T-cell (primary cell): ENCODE measurements at regions of chr11 and their contacts with region 1.

Region 1: GRCh38 chr11:82610671-82611070 is 123.0 kb downstream of the FAM181B start:
- DNase-seq: no peak
- ATAC-seq: no peak
- H3K4me3 ChIP-seq: no peak overlapping the region
- H3K4me3 Mint-ChIP-seq: no peak overlapping the region
- H3K27ac ChIP-seq: no peak overlapping the region
- H3K27ac Mint-ChIP-seq: no peak overlapping the region
- H3K4me1 ChIP-seq: no peaks in the 10 kb centered on the region
- H3K4me1 Mint-ChIP-seq: no peaks in the 10 kb centered on the region
- H3K27me3 ChIP-seq: no peaks in the 10 kb centered on the region
- H3K27me3 Mint-ChIP-seq: peaks cover 1 to 4% of the 10 kb centered on the region in 2 donors

Region 2: DNA sequence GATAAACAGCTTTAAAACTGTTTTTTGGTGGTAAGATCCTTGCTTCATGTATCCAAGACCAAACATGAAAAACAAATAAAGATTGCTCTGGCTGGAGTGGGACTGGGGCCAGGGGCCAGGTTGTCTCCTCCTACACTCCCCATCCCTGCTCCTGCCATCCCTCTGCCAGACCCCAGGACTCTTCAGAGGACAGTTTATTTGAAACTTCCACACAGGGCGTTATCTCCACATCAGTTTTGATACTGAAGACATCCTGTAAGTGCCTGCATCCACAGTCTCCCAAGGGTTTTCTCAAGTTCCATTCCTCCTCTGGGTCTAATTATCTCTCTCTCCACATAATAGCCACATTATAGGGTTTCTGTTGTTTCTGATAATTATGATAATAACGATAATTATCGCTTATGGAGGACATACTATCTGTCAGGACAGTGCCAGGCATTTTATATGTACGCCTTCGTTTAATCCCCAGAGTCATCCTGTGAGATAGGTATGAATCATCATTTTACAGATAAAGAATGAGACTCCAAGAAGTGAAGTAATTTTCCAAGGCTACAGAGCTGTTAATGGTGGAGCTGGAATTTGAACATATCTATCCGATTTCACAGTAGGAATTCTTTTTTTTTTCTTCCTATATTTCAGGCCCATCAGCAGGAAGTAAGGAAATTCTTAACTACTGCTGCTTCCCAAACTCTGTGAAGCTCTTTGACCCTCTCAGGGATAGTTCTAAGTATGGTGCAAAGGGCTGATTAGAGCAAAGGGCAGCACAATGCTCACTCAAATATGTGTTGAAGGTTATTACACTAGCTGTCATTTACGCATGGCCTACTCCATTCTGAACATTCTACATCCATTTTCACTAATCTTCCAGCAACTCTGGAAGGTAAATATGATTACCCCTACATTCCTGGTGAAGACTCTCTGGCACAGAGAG is 1163.5 kb after region 1 on chr11:
- CTCF ChIA-PET with region 1: interaction called in 1 of 2 experiments, 10 read pairs
- POLR2A ChIA-PET with region 1: no interaction called
- DNase-seq: no peak
- ATAC-seq: no peak
- H3K4me3 ChIP-seq: no peak overlapping the region
- H3K4me3 Mint-ChIP-seq: no peak overlapping the region
- H3K27ac ChIP-seq: no peak overlapping the region
- H3K27ac Mint-ChIP-seq: no peak overlapping the region
- H3K4me1 ChIP-seq: no peaks in the 10 kb centered on the region
- H3K4me1 Mint-ChIP-seq: no peaks in the 10 kb centered on the region
- H3K27me3 ChIP-seq: no peaks in the 10 kb centered on the region
- H3K27me3 Mint-ChIP-seq: peaks cover 5 to 22% of the 10 kb centered on the region in 2 donors